IMR-90 (cell line): ENCODE measurements at regions of chr14 and their contacts with region 1.

Region 1: DNA sequence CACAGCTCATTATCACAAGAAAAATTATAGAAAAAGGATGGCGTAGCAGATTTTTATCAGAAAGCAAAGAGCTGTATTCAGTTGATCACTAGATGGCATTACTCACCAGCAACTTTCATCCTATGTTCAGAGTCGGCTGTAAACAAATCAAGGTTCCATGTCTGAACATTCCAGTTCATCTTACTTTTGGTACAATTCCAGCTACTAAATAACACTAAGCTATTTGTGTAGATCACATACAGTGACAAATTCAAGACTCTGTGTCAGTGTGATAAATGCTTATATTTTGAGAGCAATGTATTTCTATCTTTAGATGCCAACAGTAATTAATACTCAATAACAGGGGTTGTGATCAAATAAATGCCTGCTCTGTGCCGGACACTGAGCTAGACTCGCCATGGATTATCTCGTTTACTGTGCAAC is 30.1 kb downstream of the NRDE2 start:
- DNase-seq: peak; percentile 80
- ATAC-seq: peak; percentile 91
- H3K4me3 ChIP-seq: no peak overlapping the region
- H3K27ac ChIP-seq: no peak overlapping the region
- H3K4me1 ChIP-seq: peaks cover under 1% of the 10 kb centered on the region; the same call in 1 of the 2 replicates
- H3K27me3 ChIP-seq: no peaks in the 10 kb centered on the region
- CTCF ChIP-seq: peak; percentile 79
- POLR2A ChIP-seq: no peak
- RAD21 ChIP-seq: peak; percentile 86

Region 2: DNA sequence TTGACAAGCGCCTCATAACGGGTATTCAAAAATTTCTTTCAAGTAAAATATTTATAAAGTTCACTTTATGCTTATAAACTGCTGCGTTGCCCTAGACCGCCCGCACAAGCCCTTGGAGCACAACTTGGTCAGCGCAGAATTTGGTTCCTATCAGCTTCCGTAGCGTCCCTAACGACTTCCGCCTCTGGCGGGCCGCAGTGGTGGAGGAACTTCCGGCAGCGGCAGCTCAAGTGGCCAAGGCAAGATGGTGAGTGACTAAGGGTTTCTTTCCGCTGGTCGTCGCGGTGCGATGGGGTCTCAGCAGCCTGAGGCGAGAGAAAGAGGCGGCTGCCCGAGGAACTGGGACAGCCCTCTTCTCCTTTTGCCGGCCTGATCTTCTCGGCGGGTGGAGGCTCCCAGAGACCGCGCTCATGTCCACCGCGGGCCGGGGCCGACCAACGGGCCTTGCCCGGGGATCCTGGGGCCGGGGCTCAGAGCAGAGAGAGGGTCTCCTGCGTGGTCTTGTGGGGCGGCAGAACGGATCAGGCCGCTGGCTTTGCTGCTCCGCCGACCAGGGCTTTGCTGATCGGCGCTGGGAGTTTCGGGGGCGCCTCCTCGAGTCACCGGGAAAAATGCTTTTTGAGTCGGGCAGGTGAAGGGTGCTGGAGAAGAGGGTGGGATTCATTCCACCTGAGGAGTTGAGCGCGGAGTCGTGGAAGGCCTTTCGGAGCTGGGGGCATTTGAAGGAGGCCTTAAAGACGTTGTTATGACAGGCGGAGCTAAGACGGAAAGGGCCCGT is 45.1 kb before region 1 on chr14 and contains the start of gene PSMC1:
- CTCF ChIA-PET with region 1: no interaction called
- POLR2A ChIA-PET with region 1: no interaction called
- dilution Hi-C with region 1: no loop called
- in situ Hi-C with region 1: no loop called
- intact Hi-C with region 1: no loop called
- DNase-seq: peak; percentile 97
- ATAC-seq: peak; percentile 98
- H3K4me3 ChIP-seq: peak within 1 kb of the TSS; percentile 84
- H3K27ac ChIP-seq: peak within 1 kb of the TSS; percentile 87
- H3K4me1 ChIP-seq: peaks cover 2% of the 10 kb centered on the region; the same call in 1 of the 2 replicates
- H3K27me3 ChIP-seq: no peaks in the 10 kb centered on the region; the same call in 1 of the 2 replicates
- CTCF ChIP-seq: no peak
- POLR2A ChIP-seq: peak; percentile 94
- RAD21 ChIP-seq: no peak
- total RNA-seq, gene PSMC1: 194 and 325 TPM in 2 replicates

Region 3: GRCh38 chr14:90383075-90383730 is 81.5 kb after region 1 on chr14:
- CTCF ChIA-PET with region 1: no interaction called
- POLR2A ChIA-PET with region 1: no interaction called
- dilution Hi-C with region 1: no loop called
- in situ Hi-C with region 1: no loop called
- intact Hi-C with region 1: loop called (anchors 5 kb)
- DNase-seq: peak; percentile 100
- ATAC-seq: peak; percentile 95
- H3K4me3 ChIP-seq: peak overlapping the region; percentile 68
- H3K27ac ChIP-seq: peak overlapping the region; percentile 92
- H3K4me1 ChIP-seq: peaks cover 13% of the 10 kb centered on the region
- H3K27me3 ChIP-seq: no peaks in the 10 kb centered on the region
- CTCF ChIP-seq: 0 out of 2 replicates have a peak, but pooled peaks have one; percentile 4
- POLR2A ChIP-seq: peak; percentile 93
- RAD21 ChIP-seq: no peak; the same call in 1 of the 2 replicates

Region 4: GRCh38 chr14:90518941-90519256 is 217.2 kb after region 1 on chr14:
- CTCF ChIA-PET with region 1: interaction called, 5 read pairs
- POLR2A ChIA-PET with region 1: no interaction called
- dilution Hi-C with region 1: no loop called
- in situ Hi-C with region 1: no loop called
- intact Hi-C with region 1: loop called (anchors 5 kb)
- DNase-seq: peak; percentile 11
- ATAC-seq: no peak
- H3K4me3 ChIP-seq: no peak overlapping the region
- H3K27ac ChIP-seq: no peak overlapping the region
- H3K4me1 ChIP-seq: peaks cover 3% of the 10 kb centered on the region
- H3K27me3 ChIP-seq: peaks cover 14% of the 10 kb centered on the region; the same call in 1 of the 2 replicates
- CTCF ChIP-seq: peak; percentile 40; the same call in 1 of the 2 replicates
- POLR2A ChIP-seq: no peak
- RAD21 ChIP-seq: peak; percentile 40

Region 5: GRCh38 chr14:90758028-90758889 is 456.6 kb after region 1 on chr14:
- CTCF ChIA-PET with region 1: interaction called, 12 read pairs
- POLR2A ChIA-PET with region 1: no interaction called
- dilution Hi-C with region 1: no loop called
- in situ Hi-C with region 1: no loop called
- intact Hi-C with region 1: loop called (anchors 1 kb)
- DNase-seq: peak; percentile 85
- ATAC-seq: peak; percentile 97
- H3K4me3 ChIP-seq: peak overlapping the region; percentile 59
- H3K27ac ChIP-seq: peak overlapping the region; percentile 50
- H3K4me1 ChIP-seq: peaks cover 6% of the 10 kb centered on the region
- H3K27me3 ChIP-seq: no peaks in the 10 kb centered on the region
- CTCF ChIP-seq: peak; percentile 95
- POLR2A ChIP-seq: 0 out of 2 replicates have a peak, but pooled peaks have one; percentile 22
- RAD21 ChIP-seq: peak; percentile 78

Region 6: DNA sequence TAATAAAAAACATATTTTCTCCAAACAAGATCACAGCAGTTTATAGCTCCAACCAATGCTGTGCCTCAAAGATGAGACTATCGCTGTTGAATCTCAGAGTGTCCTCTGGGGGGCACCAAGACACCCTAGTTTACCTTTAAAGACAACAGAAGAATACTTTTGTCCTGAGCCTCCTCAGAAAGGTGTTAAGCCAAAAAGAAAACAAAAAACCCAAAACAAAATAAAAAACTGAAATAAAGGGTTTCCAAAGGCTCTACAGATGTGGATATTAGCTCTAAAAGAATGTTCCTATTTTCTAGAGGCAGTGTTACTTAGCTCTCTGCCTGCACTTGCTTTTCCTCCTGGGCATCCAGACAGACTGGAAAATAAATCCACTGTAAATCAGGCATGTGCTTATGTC is 601.4 kb after region 1 on chr14:
- CTCF ChIA-PET with region 1: interaction called, 9 read pairs
- POLR2A ChIA-PET with region 1: no interaction called
- dilution Hi-C with region 1: no loop called
- in situ Hi-C with region 1: no loop called
- intact Hi-C with region 1: loop called (anchors 1 kb)
- DNase-seq: peak; percentile 53
- ATAC-seq: peak; percentile 94
- H3K4me3 ChIP-seq: no peak overlapping the region
- H3K27ac ChIP-seq: no peak overlapping the region
- H3K4me1 ChIP-seq: no peaks in the 10 kb centered on the region
- H3K27me3 ChIP-seq: no peaks in the 10 kb centered on the region
- CTCF ChIP-seq: peak; percentile 78
- POLR2A ChIP-seq: no peak
- RAD21 ChIP-seq: peak; percentile 75